GM12878 (cell line): ENCODE measurements at regions of chr16 and their contacts with region 1.

Region 1: DNA sequence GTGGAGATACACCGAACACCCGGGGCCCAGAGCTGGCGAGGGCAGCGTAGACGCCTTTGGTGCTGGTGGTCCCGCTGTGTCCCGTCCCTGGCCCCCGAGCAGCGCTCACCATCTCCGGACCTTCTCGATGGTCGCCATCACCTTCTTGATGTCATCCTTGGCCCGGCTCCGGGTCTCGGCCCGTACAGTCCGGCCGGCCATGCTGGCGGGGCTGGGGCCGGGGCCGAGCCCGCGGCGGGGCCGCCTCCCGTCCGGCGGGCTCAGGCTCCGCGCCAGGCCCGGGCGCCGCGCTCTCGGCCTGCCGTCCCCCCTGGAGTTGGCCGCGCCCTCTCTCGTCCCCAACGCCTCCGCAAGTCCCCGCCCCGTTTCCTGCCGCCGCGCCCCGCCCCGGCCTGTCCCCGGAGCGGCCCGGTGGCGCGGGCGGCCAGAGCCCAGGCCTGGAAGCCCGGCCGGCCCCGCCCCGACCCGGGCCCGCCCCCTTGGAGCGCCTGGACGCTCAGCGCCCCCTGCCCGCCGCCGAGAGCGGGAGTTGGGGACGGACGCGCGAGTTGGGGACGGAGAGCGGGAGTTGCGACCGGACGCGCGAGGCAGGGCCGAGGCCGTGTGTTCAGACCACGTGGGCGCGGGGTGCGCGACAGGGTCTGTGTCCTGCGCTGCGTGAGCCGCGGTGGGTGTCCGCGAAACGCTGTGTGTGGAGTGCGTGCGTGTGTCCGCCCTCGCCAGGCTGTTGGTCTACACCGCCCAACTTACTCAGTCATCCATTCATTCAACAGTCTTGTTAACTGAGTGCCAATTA is at the start of gene BCL7C:
- DNase-seq: no peak
- ATAC-seq: peak; percentile 90
- H3K4me3 ChIP-seq: peak within 1 kb of the TSS; percentile 93
- H3K27ac ChIP-seq: peak within 1 kb of the TSS; percentile 58
- H3K4me1 ChIP-seq: peaks cover 25% of the 10 kb centered on the region
- H3K27me3 ChIP-seq: no peaks in the 10 kb centered on the region
- CTCF ChIP-seq: peak; percentile 26 to 69 (median 45); a peak in 4 of 6 replicates
- EP300 ChIP-seq: no peak
- POLR2A ChIP-seq: peak; percentile 75
- RAD21 ChIP-seq: peak; percentile 45
- polyA plus RNA-seq, gene BCL7C: 1.1 to 2.1 TPM

Region 2: DNA sequence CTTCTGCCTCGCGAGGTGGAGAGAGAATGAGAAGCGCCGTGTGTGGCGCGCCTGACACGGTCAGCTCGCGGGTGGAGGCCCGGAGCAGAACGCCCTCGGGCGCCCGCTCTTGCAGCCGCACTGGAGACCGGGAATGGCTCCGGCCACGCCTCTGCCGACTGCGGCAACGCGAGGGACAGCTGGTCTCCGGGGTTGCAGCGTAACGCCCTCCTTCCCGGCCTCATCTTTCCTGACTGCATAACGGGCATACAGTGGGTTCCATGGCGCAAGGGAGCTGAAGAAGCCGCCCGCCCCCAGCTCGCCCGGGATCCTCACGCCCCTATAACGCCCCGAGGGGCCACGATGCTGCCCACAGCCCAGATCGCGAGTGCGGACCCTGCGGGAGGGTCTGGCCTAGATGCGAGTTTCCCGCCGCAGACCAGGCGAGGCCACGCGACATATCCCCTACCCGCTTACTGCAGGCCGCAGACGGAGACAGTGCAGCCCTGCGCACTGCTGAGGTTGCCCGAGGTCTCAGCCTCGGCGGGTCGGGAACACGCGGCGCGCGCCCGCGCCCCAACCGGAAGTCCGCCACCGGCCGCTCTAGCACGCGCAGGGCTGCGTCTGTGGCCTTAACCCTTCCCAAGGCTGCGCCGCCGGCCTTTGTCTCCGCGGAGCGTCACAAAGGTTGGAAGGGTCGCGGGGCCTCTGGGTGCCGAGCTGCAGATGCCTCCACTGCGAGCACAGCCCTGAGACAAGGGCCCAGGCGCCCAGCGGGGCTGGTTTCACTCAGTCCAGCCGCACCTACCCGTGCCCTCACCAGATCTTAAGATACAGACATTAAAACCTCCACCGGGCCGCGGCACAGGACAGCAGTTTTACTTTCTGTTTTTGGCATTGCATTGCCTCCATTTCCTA is 18.9 kb before region 1 on chr16:
- CTCF ChIA-PET with region 1: interaction called, 4 read pairs
- POLR2A ChIA-PET with region 1: interaction called, 16 read pairs
- RAD21 ChIA-PET with region 1: interaction called, 6 read pairs
- SMC1A ChIA-PET with region 1: interaction called, 4 read pairs
- in situ Hi-C with region 1: no loop called
- intact Hi-C with region 1: no loop called
- DNase-seq: peak; percentile 64
- ATAC-seq: peak; percentile 87
- H3K4me3 ChIP-seq: peak overlapping the region; percentile 76
- H3K27ac ChIP-seq: peak overlapping the region; percentile 93
- H3K4me1 ChIP-seq: peaks cover 22% of the 10 kb centered on the region
- H3K27me3 ChIP-seq: no peaks in the 10 kb centered on the region
- CTCF ChIP-seq: no peak
- EP300 ChIP-seq: no peak
- POLR2A ChIP-seq: peak; percentile 99
- RAD21 ChIP-seq: no peak

Region 3: DNA sequence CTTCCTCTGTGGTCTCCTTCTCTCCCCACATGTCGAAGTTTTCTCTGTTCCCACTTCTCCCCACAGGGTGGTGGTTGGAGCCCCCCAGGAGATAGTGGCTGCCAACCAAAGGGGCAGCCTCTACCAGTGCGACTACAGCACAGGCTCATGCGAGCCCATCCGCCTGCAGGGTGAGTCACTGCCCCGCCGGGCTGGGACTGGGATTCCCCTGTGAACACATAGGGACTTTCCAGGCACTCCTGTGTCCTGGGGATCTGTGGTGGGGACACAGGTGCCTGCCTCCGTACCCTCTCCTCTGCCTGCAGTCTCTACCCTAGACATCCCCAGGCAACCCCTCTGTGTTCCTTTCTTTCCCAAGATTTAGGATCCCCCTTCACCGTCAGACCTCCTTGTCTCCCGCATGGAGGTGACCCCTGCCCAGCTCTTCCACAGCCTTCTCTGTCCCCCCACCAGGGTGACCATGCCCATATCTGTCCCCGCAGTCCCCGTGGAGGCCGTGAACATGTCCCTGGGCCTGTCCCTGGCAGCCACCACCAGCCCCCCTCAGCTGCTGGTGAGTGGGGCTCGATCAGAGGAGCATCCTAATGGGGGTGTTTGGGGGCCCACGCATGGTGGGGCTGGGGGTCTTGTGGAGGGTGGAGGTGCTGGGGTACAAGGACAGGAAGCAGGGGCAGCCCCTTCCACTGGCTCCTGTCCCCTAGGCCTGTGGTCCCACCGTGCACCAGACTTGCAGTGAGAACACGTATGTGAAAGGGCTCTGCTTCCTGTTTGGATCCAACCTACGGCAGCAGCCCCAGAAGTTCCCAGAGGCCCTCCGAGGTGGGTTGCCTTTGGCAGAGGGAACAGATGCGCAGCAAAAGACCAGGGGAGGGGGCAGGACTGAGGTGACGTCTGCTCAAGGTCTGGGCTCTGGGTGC is 371.6 kb after region 1 on chr16:
- CTCF ChIA-PET with region 1: no interaction called
- POLR2A ChIA-PET with region 1: no interaction called
- RAD21 ChIA-PET with region 1: no interaction called
- SMC1A ChIA-PET with region 1: no interaction called
- in situ Hi-C with region 1: no loop called
- intact Hi-C with region 1: no loop called
- DNase-seq: peak; percentile 79
- ATAC-seq: peak; percentile 95
- H3K4me3 ChIP-seq: peak overlapping the region; percentile 32; the same call in 1 of the 2 replicates
- H3K27ac ChIP-seq: peak overlapping the region; percentile 88
- H3K4me1 ChIP-seq: peaks cover 32% of the 10 kb centered on the region
- H3K27me3 ChIP-seq: no peaks in the 10 kb centered on the region
- CTCF ChIP-seq: peak; percentile 20 to 21 (median 21); a peak in 2 of 6 replicates
- EP300 ChIP-seq: peak in 1 of 2 experiments; percentile 51; a peak in 1 of 4 replicates
- POLR2A ChIP-seq: no peak; the same call in 1 of the 2 replicates
- RAD21 ChIP-seq: peak; percentile 25; the same call in 1 of the 2 replicates